Activated T-helper 1 cell treated with anti-CD3 and anti-CD28 coated beads, Interleukin-12 subunit alpha, Interleukin-12 subunit beta, Interleukin-2, Interleukin-4 antibody, amounts not matched to agents 30 ng/mL and 10 ng/mL and 1 ng/mL, durations not matched to agents 14 hours and 24 hours and 36 hours (primary cell): ENCODE measurements at regions of chr6 and their contacts with region 1.

Region 1: DNA sequence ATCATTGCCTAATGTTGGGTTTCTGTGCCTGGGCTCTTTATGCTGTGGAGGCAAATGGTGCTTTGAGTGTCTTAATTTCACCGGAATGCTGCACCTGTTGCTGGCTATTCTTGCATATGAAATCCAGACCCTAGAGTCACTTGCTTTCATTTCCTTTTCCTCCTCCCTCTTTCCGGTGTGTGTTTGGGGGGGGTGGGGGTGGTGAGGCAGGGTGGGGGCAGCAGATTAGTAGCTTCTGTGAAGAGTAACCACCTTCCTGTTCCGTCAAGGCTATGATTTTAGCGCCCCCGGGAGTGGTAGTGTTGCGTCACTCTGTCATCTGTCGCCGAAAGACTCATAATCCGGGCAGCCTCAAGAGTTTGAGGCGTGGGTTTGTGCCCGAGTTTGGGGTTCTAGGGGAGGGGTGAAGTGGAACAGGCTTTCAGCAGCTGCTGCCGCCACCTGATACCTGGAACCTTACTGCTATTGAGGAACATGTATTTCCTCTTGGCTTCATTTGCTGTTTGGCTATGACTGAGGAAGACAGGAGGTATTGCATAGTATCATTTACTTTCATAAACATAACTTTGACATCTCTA is 49.1 kb downstream of the UTRN start:
- DNase-seq: peak; percentile 50
- H3K4me3 Mint-ChIP-seq: peak overlapping the region; percentile 80
- H3K27ac Mint-ChIP-seq: peak overlapping the region; percentile 62
- H3K4me1 Mint-ChIP-seq: peaks cover 53% of the 10 kb centered on the region
- H3K27me3 Mint-ChIP-seq: no peaks in the 10 kb centered on the region

Region 2: DNA sequence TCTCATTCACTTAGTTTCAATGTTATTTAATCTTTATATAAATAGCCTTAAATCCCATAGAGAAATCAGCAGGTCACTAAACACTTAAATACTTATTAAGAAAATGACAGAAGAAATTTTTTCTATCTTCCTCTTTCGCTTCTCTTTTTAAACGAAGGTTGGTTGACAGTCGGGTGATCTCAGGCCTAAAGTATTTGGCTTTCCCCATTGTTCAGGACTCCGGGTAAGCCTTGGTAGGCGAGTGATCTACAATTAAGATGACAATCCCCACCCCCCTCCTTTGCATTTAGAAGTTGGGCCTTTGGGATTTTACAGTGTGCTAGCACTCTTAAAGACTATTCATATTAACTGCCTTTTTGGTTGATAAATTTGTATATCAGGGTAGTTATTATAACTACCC is 68.8 kb before region 1 on chr6:
- intact Hi-C with region 1: no loop called
- DNase-seq: no peak
- H3K4me3 Mint-ChIP-seq: no peak overlapping the region
- H3K27ac Mint-ChIP-seq: no peak overlapping the region
- H3K4me1 Mint-ChIP-seq: no peaks in the 10 kb centered on the region
- H3K27me3 Mint-ChIP-seq: peaks cover 10% of the 10 kb centered on the region

Region 3: GRCh38 chr6:144305985-144306384 is 28.2 kb before region 1 on chr6:
- intact Hi-C with region 1: loop called (anchors 1 kb)
- DNase-seq: peak; percentile 41
- H3K4me3 Mint-ChIP-seq: peak overlapping the region; percentile 58
- H3K27ac Mint-ChIP-seq: peak overlapping the region; percentile 85
- H3K4me1 Mint-ChIP-seq: peaks cover 51% of the 10 kb centered on the region
- H3K27me3 Mint-ChIP-seq: peaks cover 6% of the 10 kb centered on the region

Region 4: DNA sequence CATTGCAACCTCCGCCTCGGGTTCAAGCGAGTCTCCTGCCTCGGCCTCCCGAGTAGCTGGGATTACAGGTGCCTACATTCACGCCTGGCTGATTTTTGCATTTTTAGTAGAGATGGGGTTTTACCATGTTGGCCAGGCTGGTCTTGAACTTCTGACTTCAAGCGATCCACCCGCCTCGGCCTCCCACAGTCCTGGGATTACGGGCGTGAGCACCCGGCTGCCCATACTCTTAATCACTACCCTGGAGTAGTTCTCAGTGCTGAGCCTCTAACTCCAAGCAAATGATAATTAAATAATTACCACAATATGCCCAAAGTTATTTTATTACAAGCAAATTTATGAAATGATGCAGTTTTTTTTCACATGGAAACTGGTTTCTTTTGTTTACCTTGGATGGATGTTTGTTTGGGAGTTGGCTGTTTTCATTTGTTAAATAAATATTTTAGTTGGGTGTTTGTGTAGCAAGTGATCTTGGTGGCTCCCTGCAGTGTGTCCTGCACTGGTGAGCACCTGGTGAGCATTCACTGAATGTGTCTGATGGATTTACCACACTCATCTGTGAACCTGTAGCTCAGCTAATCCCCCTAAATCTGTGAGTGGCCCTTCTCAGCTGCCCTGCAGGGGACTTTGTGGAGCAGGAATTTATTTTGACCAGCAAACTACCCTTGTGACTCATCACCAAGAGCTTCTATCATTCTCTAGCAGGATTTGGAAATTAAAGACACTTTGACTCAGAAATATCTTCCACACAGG is 12.2 kb before region 1 on chr6:
- intact Hi-C with region 1: loop called (anchors 1 kb)
- DNase-seq: no peak
- H3K4me3 Mint-ChIP-seq: no peak overlapping the region
- H3K27ac Mint-ChIP-seq: no peak overlapping the region
- H3K4me1 Mint-ChIP-seq: peaks cover 12% of the 10 kb centered on the region
- H3K27me3 Mint-ChIP-seq: peaks cover 13% of the 10 kb centered on the region

Region 5: DNA sequence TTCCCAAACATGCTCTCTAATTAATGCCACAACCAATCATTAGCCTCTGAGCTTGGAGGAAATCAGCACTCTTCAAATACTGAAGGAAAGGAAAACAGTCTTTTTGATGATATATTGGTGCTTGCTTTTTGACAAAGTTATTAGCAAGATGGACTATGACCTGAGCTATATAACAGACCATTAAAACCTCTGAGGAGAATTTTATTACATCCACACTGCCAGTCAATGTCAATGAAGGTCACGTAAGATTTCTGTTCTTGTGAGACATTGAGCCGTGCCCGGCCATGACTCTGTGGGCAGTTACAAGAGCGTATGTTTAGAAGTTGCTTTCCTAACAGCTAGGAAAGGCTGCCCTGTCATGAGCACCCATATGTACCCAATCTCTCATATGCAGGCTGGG is 609.9 kb after region 1 on chr6:
- intact Hi-C with region 1: no loop called
- DNase-seq: no peak
- H3K4me3 Mint-ChIP-seq: no peak overlapping the region
- H3K27ac Mint-ChIP-seq: no peak overlapping the region
- H3K4me1 Mint-ChIP-seq: no peaks in the 10 kb centered on the region
- H3K27me3 Mint-ChIP-seq: peaks cover 3% of the 10 kb centered on the region